Activated B cell treated with CpG ODN at 0.5 μM for 24 hours (primary cell): ENCODE measurements at regions of chr3 and their contacts with region 1.

Region 1: DNA sequence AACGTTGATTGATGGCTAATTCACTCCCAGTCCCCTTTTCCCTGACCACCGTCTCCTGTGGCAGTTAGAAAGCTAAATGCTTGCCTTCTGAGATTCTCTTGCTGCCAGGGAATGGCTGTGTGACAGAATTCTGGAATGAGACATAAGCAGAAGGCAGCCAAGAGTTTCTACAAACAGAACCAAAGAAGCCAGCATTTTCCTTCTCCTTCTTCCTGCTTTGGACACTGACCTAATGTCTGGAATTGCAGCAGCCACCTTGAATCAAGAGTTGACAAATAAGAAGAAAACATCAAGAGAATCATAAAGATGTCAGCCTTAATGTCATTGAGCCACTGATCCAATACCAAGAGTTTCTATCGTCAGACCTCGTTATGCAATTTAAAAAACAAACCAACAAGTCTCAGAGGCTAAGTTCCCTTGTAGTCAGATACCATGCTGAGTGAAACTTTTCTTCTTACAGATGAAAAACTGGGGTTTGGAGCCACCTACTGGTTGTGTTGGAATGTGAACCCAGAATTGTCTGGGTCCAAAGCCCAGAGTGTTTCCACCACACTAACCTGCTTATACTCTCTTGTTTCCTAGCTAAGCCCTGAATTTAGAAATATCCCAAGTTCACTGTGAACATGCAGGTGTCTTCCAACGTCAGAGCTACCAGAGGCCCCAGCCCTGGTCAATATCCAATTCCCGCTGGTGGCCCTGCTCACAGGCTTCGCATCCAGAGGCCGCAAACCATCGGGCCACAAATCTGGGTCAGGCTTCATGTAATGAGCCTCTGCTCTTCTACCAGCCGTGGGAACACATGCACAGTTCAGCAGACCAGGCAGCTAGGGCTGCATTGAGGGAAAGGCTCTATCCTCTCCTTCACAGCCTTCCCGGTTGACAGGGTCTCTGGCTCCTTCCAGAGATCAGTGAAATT is 42.5 kb downstream of the MCF2L2 start:
- DNase-seq: no peak
- ATAC-seq: peak; percentile 81
- H3K4me3 Mint-ChIP-seq: no peak overlapping the region
- H3K27ac Mint-ChIP-seq: no peak overlapping the region
- H3K4me1 Mint-ChIP-seq: peaks cover 15% of the 10 kb centered on the region
- H3K27me3 Mint-ChIP-seq: peaks cover 15% of the 10 kb centered on the region
- CTCF ChIP-seq: peak; percentile 38

Region 2: GRCh38 chr3:181709537-181710279 is 1676.2 kb before region 1 on chr3:
- CTCF ChIA-PET with region 1: no interaction called
- POLR2A ChIA-PET with region 1: no interaction called
- intact Hi-C with region 1: loop called (anchors 10 kb)
- DNase-seq: no peak
- ATAC-seq: no peak
- H3K4me3 Mint-ChIP-seq: peak overlapping the region; percentile 60
- H3K27ac Mint-ChIP-seq: peak overlapping the region; percentile 19
- H3K4me1 Mint-ChIP-seq: peaks cover 12% of the 10 kb centered on the region
- H3K27me3 Mint-ChIP-seq: peaks cover 48% of the 10 kb centered on the region
- CTCF ChIP-seq: peak; percentile 67

Region 3: DNA sequence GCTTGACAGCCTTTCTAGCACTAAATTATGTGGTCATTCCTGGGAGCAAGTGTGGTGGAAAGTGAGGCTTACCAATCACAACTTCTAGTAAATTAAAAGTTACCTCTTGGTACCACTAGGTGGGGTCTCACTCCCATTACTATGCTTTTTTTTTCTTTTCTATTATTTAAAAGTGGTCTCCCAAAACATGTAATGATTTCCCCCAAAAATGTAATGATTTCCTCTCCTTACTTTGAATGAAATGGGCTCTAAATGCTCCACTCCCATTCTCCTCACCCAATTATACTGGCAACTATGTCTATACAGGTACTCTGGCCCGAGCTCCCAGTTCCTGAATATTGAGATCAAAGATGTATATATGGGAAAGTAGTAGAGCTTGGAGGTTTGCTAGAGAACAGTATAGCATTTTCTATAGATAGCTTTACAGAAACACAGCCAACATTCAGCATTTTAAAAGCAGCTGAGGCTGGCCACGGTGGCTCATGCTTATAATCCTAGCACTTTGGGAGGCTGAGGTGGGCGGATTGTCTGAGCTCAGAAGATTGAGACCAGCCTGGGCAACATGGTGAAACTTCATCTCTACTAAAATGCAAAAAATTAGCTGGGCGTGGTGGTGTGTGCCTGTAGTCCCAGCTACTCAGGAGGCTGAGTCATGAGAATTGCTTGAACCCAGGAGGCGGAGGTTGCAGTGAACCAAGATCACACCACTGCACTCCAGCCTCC is 476.5 kb before region 1 on chr3:
- CTCF ChIA-PET with region 1: interaction called, 6 read pairs
- POLR2A ChIA-PET with region 1: no interaction called
- intact Hi-C with region 1: loop called (anchors 1 kb)
- DNase-seq: no peak
- ATAC-seq: no peak
- H3K4me3 Mint-ChIP-seq: no peak overlapping the region
- H3K27ac Mint-ChIP-seq: no peak overlapping the region
- H3K4me1 Mint-ChIP-seq: peaks cover 4% of the 10 kb centered on the region
- H3K27me3 Mint-ChIP-seq: no peaks in the 10 kb centered on the region
- CTCF ChIP-seq: no peak

Region 4: GRCh38 chr3:183061431-183062172 is 324.4 kb before region 1 on chr3:
- CTCF ChIA-PET with region 1: no interaction called
- POLR2A ChIA-PET with region 1: no interaction called
- intact Hi-C with region 1: no loop called
- DNase-seq: no peak
- ATAC-seq: no peak
- H3K4me3 Mint-ChIP-seq: no peak overlapping the region
- H3K27ac Mint-ChIP-seq: no peak overlapping the region
- H3K4me1 Mint-ChIP-seq: no peaks in the 10 kb centered on the region
- H3K27me3 Mint-ChIP-seq: no peaks in the 10 kb centered on the region
- CTCF ChIP-seq: no peak

Region 5: DNA sequence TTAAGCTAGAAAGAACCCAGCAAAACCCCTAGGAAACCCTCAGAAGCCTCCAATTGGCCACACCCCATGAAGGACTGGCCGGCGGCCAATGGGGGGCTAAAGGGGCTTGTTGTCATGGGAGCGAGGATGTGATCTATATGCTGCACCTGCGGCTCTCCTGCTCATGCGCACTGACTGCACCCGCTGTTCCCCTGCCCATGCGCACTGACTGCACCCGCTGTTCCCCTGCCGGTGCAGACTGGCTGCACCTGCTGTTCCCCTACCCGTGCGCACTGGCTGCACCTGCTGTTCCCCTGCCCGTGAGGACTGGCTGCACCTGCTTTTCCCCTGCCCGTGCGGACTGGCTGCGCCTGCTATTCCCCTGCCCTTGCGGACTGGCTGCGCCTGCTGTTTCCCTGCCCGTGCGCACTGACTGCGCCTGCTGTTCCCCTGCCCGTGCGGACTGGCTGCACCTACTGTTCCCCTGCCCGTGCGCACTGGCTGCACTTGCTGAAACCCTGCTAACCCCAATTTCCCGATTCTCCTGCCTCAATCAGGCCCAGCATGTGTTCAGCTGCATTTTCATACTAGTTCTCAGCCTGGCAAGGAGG is 269.8 kb before region 1 on chr3:
- CTCF ChIA-PET with region 1: interaction called, 174 read pairs
- POLR2A ChIA-PET with region 1: no interaction called
- intact Hi-C with region 1: no loop called
- DNase-seq: peak; percentile 63
- ATAC-seq: peak; percentile 92
- H3K4me3 Mint-ChIP-seq: peak overlapping the region; percentile 69
- H3K27ac Mint-ChIP-seq: peak overlapping the region; percentile 61
- H3K4me1 Mint-ChIP-seq: peaks cover 41% of the 10 kb centered on the region
- H3K27me3 Mint-ChIP-seq: peaks cover 16% of the 10 kb centered on the region
- CTCF ChIP-seq: no peak

Region 6: GRCh38 chr3:183178629-183179549 is 207.1 kb before region 1 on chr3:
- CTCF ChIA-PET with region 1: interaction called, 134 read pairs
- POLR2A ChIA-PET with region 1: no interaction called
- intact Hi-C with region 1: loop called (anchors 1 kb)
- DNase-seq: no peak
- ATAC-seq: peak; percentile 61
- H3K4me3 Mint-ChIP-seq: peak overlapping the region; percentile 46
- H3K27ac Mint-ChIP-seq: no peak overlapping the region
- H3K4me1 Mint-ChIP-seq: peaks cover 12% of the 10 kb centered on the region
- H3K27me3 Mint-ChIP-seq: peaks cover 60% of the 10 kb centered on the region
- CTCF ChIP-seq: no peak

Region 7: GRCh38 chr3:183252973-183253901 is 132.7 kb before region 1 on chr3 and contains the start of gene B3GNT5:
- CTCF ChIA-PET with region 1: interaction called, 18 read pairs
- POLR2A ChIA-PET with region 1: no interaction called
- intact Hi-C with region 1: loop called (anchors 1 kb)
- DNase-seq: peak; percentile 35
- ATAC-seq: peak; percentile 59
- H3K4me3 Mint-ChIP-seq: peak within 1 kb of the TSS; percentile 78
- H3K27ac Mint-ChIP-seq: no peak within 1 kb of the TSS
- H3K4me1 Mint-ChIP-seq: peaks cover 4% of the 10 kb centered on the region
- H3K27me3 Mint-ChIP-seq: peaks cover 40% of the 10 kb centered on the region
- CTCF ChIP-seq: no peak
- total RNA-seq, gene B3GNT5: 0.37 and 0.38 TPM in 2 replicates

Region 8: GRCh38 chr3:183306798-183307671 is 78.9 kb before region 1 on chr3:
- CTCF ChIA-PET with region 1: no interaction called
- POLR2A ChIA-PET with region 1: no interaction called
- intact Hi-C with region 1: no loop called
- DNase-seq: no peak
- ATAC-seq: peak; percentile 93
- H3K4me3 Mint-ChIP-seq: peak overlapping the region; percentile 30
- H3K27ac Mint-ChIP-seq: peak overlapping the region; percentile 22
- H3K4me1 Mint-ChIP-seq: peaks cover 12% of the 10 kb centered on the region
- H3K27me3 Mint-ChIP-seq: no peaks in the 10 kb centered on the region
- CTCF ChIP-seq: no peak

Region 9: DNA sequence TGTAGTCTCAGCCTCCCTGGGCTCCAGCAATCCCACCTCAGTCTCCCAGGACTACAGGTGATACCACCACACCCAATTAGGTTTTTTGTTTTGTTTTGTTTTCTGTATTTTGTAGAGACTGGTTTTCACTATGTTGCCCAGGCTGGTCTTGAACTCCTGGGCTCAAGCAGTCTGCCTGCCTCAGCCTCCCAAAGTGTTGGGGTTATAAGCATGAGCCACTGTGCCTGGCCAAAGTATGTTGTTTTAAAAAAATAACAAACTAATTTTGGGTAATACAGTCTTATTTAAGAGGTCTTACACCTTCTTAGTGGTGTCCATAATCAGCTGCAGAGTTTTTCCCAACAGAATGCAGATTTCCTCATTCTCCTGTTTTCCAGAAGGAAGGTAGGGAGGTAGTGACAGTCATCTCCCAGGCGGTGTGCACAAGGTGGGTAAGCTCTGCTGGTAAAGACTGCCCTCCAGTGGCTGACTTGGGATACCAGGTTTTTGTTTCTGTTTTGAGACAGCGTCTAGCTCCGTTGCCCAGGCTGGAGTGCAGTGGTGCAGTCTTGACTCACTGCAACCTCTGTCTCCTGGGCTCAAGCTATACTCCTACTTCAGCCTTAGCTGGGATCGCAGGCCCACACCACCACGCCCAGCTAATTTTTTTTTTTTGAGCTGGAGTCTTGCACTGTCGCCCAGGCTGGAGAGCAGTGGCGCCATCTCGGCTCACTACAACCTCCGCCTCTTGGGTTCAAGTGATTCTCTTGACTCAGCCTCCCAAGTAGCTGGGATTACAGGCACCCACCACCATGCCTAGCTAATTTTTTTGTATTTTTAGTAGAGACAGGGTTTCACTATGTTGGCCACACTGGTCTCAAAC is 381.0 kb after region 1 on chr3:
- CTCF ChIA-PET with region 1: interaction called, 5 read pairs
- POLR2A ChIA-PET with region 1: no interaction called
- intact Hi-C with region 1: loop called (anchors 2 kb)
- DNase-seq: peak; percentile 32
- ATAC-seq: peak; percentile 86
- H3K4me3 Mint-ChIP-seq: no peak overlapping the region
- H3K27ac Mint-ChIP-seq: no peak overlapping the region
- H3K4me1 Mint-ChIP-seq: peaks cover 9% of the 10 kb centered on the region
- H3K27me3 Mint-ChIP-seq: no peaks in the 10 kb centered on the region
- CTCF ChIP-seq: no peak